Psoas muscle (tissue), 8 donors: ENCODE measurements at regions of chr4 and their contacts with region 1.

Region 1: GRCh38 chr4:138864961-138865720 is 150.4 kb upstream of the NOCT start:
- DNase-seq: no peak
- ATAC-seq: no peak
- H3K4me3 ChIP-seq: no peak overlapping the region
- H3K27ac ChIP-seq: no peak overlapping the region
- H3K4me1 ChIP-seq: no peaks in the 10 kb centered on the region
- H3K27me3 ChIP-seq: no peaks in the 10 kb centered on the region
- CTCF ChIP-seq: no peak

Region 2: GRCh38 chr4:137705171-137705783 is 1159.9 kb before region 1 on chr4:
- intact Hi-C with region 1: no loop called
- DNase-seq: no peak
- ATAC-seq: peak in 1 of 4 donors; percentile 52
- H3K4me3 ChIP-seq: no peak overlapping the region
- H3K27ac ChIP-seq: no peak overlapping the region
- H3K4me1 ChIP-seq: no peaks in the 10 kb centered on the region
- H3K27me3 ChIP-seq: no peaks in the 10 kb centered on the region
- CTCF ChIP-seq: no peak

Region 3: GRCh38 chr4:138199568-138200235 is 665.4 kb before region 1 on chr4:
- intact Hi-C with region 1: loop called in 1 of 2 experiments (anchors 10 kb)
- DNase-seq: no peak
- ATAC-seq: no peak
- H3K4me3 ChIP-seq: no peak overlapping the region
- H3K27ac ChIP-seq: no peak overlapping the region
- H3K4me1 ChIP-seq: peaks cover 3% of the 10 kb centered on the region
- H3K27me3 ChIP-seq: no peaks in the 10 kb centered on the region
- CTCF ChIP-seq: no peak

Region 4: DNA sequence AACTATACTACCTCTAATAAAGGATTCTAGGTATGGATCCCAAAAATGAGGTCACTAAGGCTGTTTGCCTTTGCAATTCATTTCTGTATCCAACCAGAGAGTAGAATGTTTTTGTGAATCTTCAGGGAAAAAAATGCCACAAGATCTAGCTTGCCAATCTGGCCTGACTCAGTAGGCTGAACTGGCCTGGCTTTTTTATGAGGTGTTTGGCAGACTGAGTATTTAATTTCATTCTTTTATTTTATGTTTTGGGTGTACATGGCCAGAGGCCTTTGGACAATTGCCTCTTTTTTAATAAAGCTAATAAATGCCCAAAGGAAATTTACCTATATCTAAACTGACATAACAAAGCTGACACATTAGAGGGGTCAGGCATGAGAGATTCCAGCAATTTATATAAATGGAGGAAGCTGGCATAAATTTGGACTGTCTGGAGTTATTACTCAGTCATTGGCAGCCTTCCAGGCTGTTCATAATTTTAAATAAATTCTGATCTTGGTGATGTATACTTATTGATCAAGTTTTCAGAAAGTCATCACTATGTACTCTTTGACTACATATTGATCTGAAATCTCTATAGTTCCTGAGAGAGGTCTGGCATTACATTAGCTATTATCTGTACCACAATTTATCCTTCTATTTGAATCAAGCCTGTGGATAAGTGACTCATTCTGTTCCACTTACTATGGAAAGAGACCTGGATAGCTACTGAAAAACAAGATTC is 226.0 kb before region 1 on chr4:
- intact Hi-C with region 1: no loop called
- DNase-seq: no peak
- ATAC-seq: no peak
- H3K4me3 ChIP-seq: no peak overlapping the region
- H3K27ac ChIP-seq: no peak overlapping the region
- H3K4me1 ChIP-seq: no peaks in the 10 kb centered on the region
- H3K27me3 ChIP-seq: no peaks in the 10 kb centered on the region
- CTCF ChIP-seq: no peak

Region 5: DNA sequence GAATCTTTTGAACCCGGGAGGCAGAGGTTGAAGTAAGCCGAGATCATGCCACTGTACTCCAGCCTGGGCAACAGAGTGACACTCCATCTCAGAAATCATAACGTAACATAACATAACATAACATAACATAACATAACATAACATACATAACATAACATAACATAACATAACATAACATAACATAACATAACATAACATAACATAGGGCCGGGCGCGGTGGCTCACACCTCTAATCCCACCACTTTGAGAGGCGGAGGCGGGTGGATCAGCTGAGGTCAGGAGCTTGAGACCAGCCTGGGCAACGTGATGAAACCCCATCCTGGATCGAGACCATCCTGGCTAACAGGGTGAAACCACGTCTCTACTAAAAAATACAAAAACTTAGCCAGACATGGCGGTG is 227.1 kb after region 1 on chr4:
- intact Hi-C with region 1: no loop called
- DNase-seq: no peak
- ATAC-seq: no peak
- H3K4me3 ChIP-seq: no peak overlapping the region
- H3K27ac ChIP-seq: no peak overlapping the region
- H3K4me1 ChIP-seq: no peaks in the 10 kb centered on the region
- H3K27me3 ChIP-seq: no peaks in the 10 kb centered on the region
- CTCF ChIP-seq: no peak